Naive thymus-derived CD4-positive, alpha-beta T cell (primary cell): ENCODE measurements at regions of chr11 and their contacts with region 1.

Region 1: DNA sequence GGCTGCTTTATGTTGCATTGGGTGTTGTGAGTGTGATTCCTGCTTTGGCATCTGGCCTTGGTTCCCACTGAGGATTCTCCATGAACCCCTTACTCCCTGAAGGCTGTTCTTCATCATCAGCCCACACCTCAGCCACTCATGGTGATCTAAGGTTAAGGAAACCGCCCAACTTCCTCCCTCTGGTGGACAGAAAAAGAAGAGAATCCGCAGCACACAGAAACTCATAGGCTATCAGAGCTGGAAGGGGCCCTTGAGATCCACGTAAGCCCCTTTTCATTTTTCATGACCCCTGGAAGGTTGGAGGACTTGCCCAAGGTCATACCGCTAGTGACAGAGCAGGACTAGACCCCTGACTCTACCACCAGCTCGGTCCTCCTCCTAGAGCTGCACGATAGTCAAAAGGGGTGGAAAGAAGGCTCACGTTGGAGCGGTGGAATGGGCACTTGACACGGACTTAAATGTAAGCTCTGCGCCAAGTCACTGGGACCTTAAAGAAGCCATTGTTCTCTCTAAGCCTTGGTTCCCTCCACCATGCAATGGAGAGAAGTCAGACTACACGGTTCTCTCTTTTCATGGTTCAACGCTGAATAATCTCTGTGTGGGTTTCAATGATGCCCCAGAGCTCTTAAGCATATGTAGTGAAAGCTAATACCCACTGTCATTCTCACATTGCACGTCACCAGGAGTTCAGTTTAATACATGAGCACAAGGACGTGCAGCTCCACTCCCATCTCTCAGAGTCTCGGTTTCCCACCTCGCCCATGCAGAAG is 83.6 kb upstream of the CRTAM start:
- DNase-seq: peak in 7 of 9 donors; percentile 27 to 63 (median 54)
- ATAC-seq: peak; percentile 57
- H3K4me3 ChIP-seq: no peak overlapping the region
- H3K4me3 Mint-ChIP-seq: peak overlapping the region in 6 of 10 donors; percentile 0 to 38 (median 26)
- H3K27ac ChIP-seq: no peak overlapping the region
- H3K27ac Mint-ChIP-seq: peak overlapping the region in 5 of 9 donors; percentile 43 to 79 (median 60)
- H3K4me1 ChIP-seq: peaks cover 11 to 27% of the 10 kb centered on the region in 2 donors
- H3K4me1 Mint-ChIP-seq: peaks cover 23 to 87% (median 68%) of the 10 kb centered on the region in 7 donors
- H3K27me3 ChIP-seq: no peaks in the 10 kb centered on the region
- H3K27me3 Mint-ChIP-seq: peaks cover 0 to 11% (median 0%) of the 10 kb centered on the region in 5 donors

Region 2: GRCh38 chr11:122559734-122560382 is 194.9 kb before region 1 on chr11:
- CTCF ChIA-PET with region 1: no interaction called
- POLR2A ChIA-PET with region 1: no interaction called
- intact Hi-C with region 1: no loop called
- DNase-seq: no peak
- ATAC-seq: no peak
- H3K4me3 ChIP-seq: no peak overlapping the region
- H3K4me3 Mint-ChIP-seq: no peak overlapping the region
- H3K27ac ChIP-seq: no peak overlapping the region
- H3K27ac Mint-ChIP-seq: no peak overlapping the region
- H3K4me1 ChIP-seq: no peaks in the 10 kb centered on the region
- H3K4me1 Mint-ChIP-seq: peaks cover 0 to 4% (median 0%) of the 10 kb centered on the region in 7 donors
- H3K27me3 ChIP-seq: no peaks in the 10 kb centered on the region
- H3K27me3 Mint-ChIP-seq: peaks cover 18 to 36% (median 25%) of the 10 kb centered on the region in 5 donors

Region 3: DNA sequence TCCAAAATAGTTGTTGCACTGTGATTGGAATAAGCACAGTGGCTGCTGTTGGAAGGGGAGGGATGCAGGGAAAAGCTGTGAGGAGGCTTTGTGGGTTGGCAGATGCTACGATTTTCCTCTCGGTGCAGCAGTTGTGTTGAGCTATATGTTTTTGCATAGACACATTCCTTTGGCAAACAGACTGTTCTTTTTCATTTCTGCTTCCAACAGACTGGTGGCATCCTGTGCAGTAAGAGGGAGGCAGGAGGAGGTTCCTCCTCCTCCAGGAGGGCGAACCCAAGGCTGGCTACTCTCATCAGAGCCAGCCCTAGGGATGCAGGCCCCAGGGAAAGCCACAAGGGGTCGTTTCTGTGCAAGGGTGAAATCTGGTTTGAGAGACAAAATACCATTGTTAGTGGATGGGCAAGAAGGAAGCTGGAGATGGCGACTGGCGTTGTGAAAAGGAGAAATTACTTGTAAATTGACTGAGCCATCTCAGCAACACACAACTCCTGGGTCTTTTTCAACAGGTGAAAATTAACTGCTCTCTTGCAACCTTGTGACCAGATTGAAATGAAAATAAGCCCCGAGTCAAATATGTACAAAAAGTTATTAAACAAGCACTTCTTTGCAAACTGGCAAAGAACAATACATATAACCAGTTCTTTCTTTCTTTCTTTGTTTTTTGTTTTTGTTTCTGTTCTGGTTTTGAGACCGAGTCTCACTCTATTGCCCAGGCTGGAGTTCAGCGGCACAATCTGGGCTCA is 125.8 kb before region 1 on chr11:
- CTCF ChIA-PET with region 1: interaction called, 88 read pairs
- POLR2A ChIA-PET with region 1: interaction called, 9 read pairs
- intact Hi-C with region 1: loop called (anchors 1 kb)
- DNase-seq: peak; percentile 46 to 70 (median 62)
- ATAC-seq: peak; percentile 93
- H3K4me3 ChIP-seq: no peak overlapping the region
- H3K4me3 Mint-ChIP-seq: no peak overlapping the region
- H3K27ac ChIP-seq: no peak overlapping the region
- H3K27ac Mint-ChIP-seq: peak overlapping the region in 4 of 9 donors; percentile 18 to 49 (median 24)
- H3K4me1 ChIP-seq: no peaks in the 10 kb centered on the region
- H3K4me1 Mint-ChIP-seq: peaks cover 0 to 30% (median 16%) of the 10 kb centered on the region in 7 donors
- H3K27me3 ChIP-seq: no peaks in the 10 kb centered on the region
- H3K27me3 Mint-ChIP-seq: peaks cover 0 to 16% (median 0%) of the 10 kb centered on the region in 5 donors

Region 4: GRCh38 chr11:122661182-122661945 is 93.4 kb before region 1 on chr11:
- CTCF ChIA-PET with region 1: interaction called, 80 read pairs
- POLR2A ChIA-PET with region 1: interaction called, 34 read pairs
- intact Hi-C with region 1: loop called (anchors 1 kb)
- DNase-seq: no peak
- ATAC-seq: no peak
- H3K4me3 ChIP-seq: no peak overlapping the region
- H3K4me3 Mint-ChIP-seq: peak overlapping the region in 1 of 10 donors; percentile 35
- H3K27ac ChIP-seq: no peak overlapping the region
- H3K27ac Mint-ChIP-seq: peak overlapping the region in 7 of 9 donors; percentile 21 to 94 (median 77)
- H3K4me1 ChIP-seq: peaks cover 14 to 48% of the 10 kb centered on the region in 2 donors
- H3K4me1 Mint-ChIP-seq: peaks cover 12 to 93% (median 76%) of the 10 kb centered on the region in 7 donors
- H3K27me3 ChIP-seq: no peaks in the 10 kb centered on the region
- H3K27me3 Mint-ChIP-seq: peaks cover 0 to 22% (median 0%) of the 10 kb centered on the region in 5 donors

Region 5: GRCh38 chr11:122673701-122674100 is 81.0 kb before region 1 on chr11:
- CTCF ChIA-PET with region 1: interaction called, 29 read pairs
- POLR2A ChIA-PET with region 1: interaction called, 19 read pairs
- intact Hi-C with region 1: no loop called
- DNase-seq: peak in 1 of 9 donors; percentile 20
- ATAC-seq: no peak
- H3K4me3 ChIP-seq: no peak overlapping the region
- H3K4me3 Mint-ChIP-seq: peak overlapping the region in 7 of 10 donors; percentile 2 to 70 (median 37)
- H3K27ac ChIP-seq: peak overlapping the region; percentile 36
- H3K27ac Mint-ChIP-seq: peak overlapping the region in 8 of 9 donors; percentile 48 to 99 (median 88)
- H3K4me1 ChIP-seq: peaks cover 43 to 70% of the 10 kb centered on the region in 2 donors
- H3K4me1 Mint-ChIP-seq: peaks cover 32 to 98% (median 83%) of the 10 kb centered on the region in 7 donors
- H3K27me3 ChIP-seq: no peaks in the 10 kb centered on the region
- H3K27me3 Mint-ChIP-seq: peaks cover 0 to 3% (median 0%) of the 10 kb centered on the region in 5 donors

Region 6: DNA sequence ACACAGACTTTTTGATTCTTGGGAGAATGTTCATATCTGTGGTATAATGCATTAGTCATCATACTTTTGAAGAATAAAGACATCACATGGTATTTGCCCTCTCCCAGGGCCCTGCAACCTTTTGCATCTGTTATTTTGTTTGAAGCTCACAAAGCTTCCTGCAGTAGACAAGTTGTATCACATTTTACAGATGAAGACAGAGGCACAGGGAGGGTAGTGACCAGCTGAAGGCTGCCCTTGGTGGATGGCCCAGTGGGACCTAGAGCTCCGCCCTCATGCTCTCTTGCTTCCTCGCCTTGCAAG is 32.8 kb before region 1 on chr11:
- CTCF ChIA-PET with region 1: interaction called, 15 read pairs
- POLR2A ChIA-PET with region 1: interaction called, 5 read pairs
- intact Hi-C with region 1: loop called in 1 of 2 experiments (anchors 1 kb)
- DNase-seq: peak in 6 of 9 donors; percentile 10 to 42 (median 29)
- ATAC-seq: peak; percentile 44
- H3K4me3 ChIP-seq: no peak overlapping the region
- H3K4me3 Mint-ChIP-seq: peak overlapping the region in 8 of 10 donors; percentile 7 to 77 (median 44)
- H3K27ac ChIP-seq: peak overlapping the region; percentile 1
- H3K27ac Mint-ChIP-seq: peak overlapping the region in 8 of 9 donors; percentile 47 to 95 (median 81)
- H3K4me1 ChIP-seq: peaks cover 28 to 57% of the 10 kb centered on the region in 2 donors
- H3K4me1 Mint-ChIP-seq: peaks cover 51 to 86% (median 79%) of the 10 kb centered on the region in 7 donors
- H3K27me3 ChIP-seq: no peaks in the 10 kb centered on the region
- H3K27me3 Mint-ChIP-seq: peaks cover 0 to 16% (median 0%) of the 10 kb centered on the region in 5 donors

Region 7: DNA sequence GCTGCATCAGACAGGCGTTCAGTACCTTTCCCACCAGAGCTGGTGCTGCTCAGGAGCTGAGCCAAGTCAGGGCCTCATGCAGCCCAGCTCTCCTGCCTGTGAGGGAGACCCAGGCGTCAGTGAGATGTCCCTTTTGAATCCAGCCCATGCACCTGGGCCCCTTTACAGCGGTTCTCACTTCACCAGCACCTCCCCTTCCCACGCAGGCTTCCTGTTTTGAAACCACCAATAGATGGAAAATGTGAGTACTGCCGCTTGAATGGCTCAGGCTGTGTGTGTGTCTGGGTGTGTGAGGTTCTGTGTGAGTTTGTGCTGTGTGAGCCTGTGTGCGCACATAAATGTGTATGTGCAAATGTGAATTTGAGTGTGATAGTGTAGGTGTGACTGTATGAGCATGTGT is 10.8 kb before region 1 on chr11:
- CTCF ChIA-PET with region 1: interaction called, 45 read pairs
- POLR2A ChIA-PET with region 1: interaction called, 20 read pairs
- intact Hi-C with region 1: loop called in 1 of 2 experiments (anchors 1 kb)
- DNase-seq: peak; percentile 28 to 90 (median 80)
- ATAC-seq: peak; percentile 75
- H3K4me3 ChIP-seq: peak overlapping the region; percentile 39
- H3K4me3 Mint-ChIP-seq: no peak overlapping the region
- H3K27ac ChIP-seq: peak overlapping the region; percentile 84
- H3K27ac Mint-ChIP-seq: no peak overlapping the region
- H3K4me1 ChIP-seq: peaks cover 58 to 66% of the 10 kb centered on the region in 2 donors
- H3K4me1 Mint-ChIP-seq: peaks cover 0 to 40% (median 18%) of the 10 kb centered on the region in 7 donors
- H3K27me3 ChIP-seq: no peaks in the 10 kb centered on the region
- H3K27me3 Mint-ChIP-seq: peaks cover 0 to 21% (median 0%) of the 10 kb centered on the region in 5 donors

Region 8: GRCh38 chr11:122781378-122782195 is 26.8 kb after region 1 on chr11:
- CTCF ChIA-PET with region 1: interaction called, 56 read pairs
- POLR2A ChIA-PET with region 1: interaction called, 5 read pairs
- intact Hi-C with region 1: loop called (anchors 1 to 2 kb)
- DNase-seq: peak; percentile 50 to 80 (median 69)
- ATAC-seq: peak; percentile 95
- H3K4me3 ChIP-seq: no peak overlapping the region
- H3K4me3 Mint-ChIP-seq: no peak overlapping the region
- H3K27ac ChIP-seq: no peak overlapping the region
- H3K27ac Mint-ChIP-seq: peak overlapping the region in 2 of 9 donors; percentile 14 to 56
- H3K4me1 ChIP-seq: no peaks in the 10 kb centered on the region
- H3K4me1 Mint-ChIP-seq: peaks cover 0 to 22% (median 11%) of the 10 kb centered on the region in 7 donors
- H3K27me3 ChIP-seq: no peaks in the 10 kb centered on the region
- H3K27me3 Mint-ChIP-seq: no peaks in the 10 kb centered on the region